AG04450 (cell line): ENCODE measurements at regions of chr2 and their contacts with region 1.

Region 1: GRCh38 chr2:219073413-219074129 is 12.8 kb upstream of the IHH start:
- DNase-seq: peak; percentile 27
- H3K4me3 ChIP-seq: no peak overlapping the region
- H3K27ac ChIP-seq: no peak overlapping the region
- H3K27me3 ChIP-seq: no peaks in the 10 kb centered on the region
- CTCF ChIP-seq: peak; percentile 63

Region 2: GRCh38 chr2:218523651-218524050 is 549.9 kb before region 1 on chr2:
- CTCF ChIA-PET with region 1: no interaction called
- POLR2A ChIA-PET with region 1: no interaction called
- DNase-seq: no peak
- H3K4me3 ChIP-seq: no peak overlapping the region
- H3K27ac ChIP-seq: no peak overlapping the region
- H3K27me3 ChIP-seq: no peaks in the 10 kb centered on the region
- CTCF ChIP-seq: no peak

Region 3: DNA sequence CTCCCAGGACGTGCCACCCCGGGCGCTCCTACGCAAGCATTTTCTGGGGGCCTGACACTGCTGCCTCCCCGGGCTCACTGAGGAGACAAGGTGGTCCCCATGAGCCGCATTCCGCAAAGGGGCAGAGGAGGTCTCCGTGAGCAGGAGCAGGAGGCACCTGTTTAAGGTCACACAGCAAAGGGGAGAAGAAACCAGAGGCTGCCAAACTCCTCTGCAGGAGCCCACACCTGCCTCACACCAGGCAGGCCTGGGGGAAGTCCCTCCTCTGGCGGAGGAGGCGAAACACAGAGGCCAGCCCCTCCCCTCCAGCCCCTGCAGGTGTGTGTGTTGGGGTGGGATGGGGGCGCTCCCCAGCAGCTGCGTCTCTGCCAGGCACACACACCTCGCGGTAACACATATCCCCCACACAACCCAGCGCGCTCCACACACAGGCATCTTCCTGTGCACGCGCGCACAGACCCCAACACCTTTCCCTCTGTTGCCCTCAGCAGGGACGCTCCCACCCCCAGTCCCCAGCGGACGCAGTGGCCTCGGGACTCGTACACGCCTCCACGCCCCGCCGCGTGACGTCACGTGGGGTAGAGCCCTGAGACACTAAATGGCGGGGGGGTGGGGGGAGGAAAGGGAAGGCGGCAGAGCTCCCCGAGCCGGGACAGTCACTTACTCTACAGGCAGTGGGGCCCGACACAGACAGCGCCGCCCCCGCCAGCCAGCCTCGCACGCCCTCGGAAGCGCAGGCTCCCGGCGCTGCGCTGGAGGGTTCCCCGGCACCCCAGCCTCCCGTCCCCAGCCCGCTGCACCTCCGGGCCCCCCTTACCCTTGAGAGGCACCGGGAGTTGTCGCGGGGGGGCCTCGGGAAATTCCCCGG is 193.5 kb before region 1 on chr2:
- CTCF ChIA-PET with region 1: no interaction called
- POLR2A ChIA-PET with region 1: no interaction called
- DNase-seq: no peak
- H3K4me3 ChIP-seq: no peak overlapping the region
- H3K27ac ChIP-seq: no peak overlapping the region
- H3K27me3 ChIP-seq: peaks cover 81% of the 10 kb centered on the region
- CTCF ChIP-seq: no peak

Region 4: DNA sequence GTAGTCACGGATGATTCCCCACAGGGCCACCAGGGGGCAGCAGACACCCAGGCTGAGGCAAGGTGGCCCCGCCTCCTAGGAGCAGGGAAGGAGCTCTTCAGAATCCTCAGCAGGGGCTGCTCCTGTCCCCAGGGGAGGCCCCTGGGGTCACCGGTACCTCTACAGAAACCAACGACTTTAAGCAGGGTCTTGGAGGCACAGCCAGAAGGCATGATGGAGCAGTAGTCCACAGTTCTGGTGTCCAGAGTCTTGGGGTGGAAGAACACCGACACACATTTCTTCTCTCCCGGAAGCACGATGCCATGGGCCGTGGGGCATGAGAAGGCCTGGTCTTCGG is 43.8 kb before region 1 on chr2:
- CTCF ChIA-PET with region 1: interaction called, 22 read pairs
- POLR2A ChIA-PET with region 1: no interaction called
- DNase-seq: peak; percentile 33
- H3K4me3 ChIP-seq: no peak overlapping the region
- H3K27ac ChIP-seq: no peak overlapping the region
- H3K27me3 ChIP-seq: peaks cover 41% of the 10 kb centered on the region
- CTCF ChIP-seq: peak; percentile 95

Region 5: GRCh38 chr2:219087361-219087760 is 13.8 kb after region 1 on chr2:
- CTCF ChIA-PET with region 1: interaction called, 16 read pairs
- POLR2A ChIA-PET with region 1: no interaction called
- DNase-seq: no peak
- H3K4me3 ChIP-seq: no peak overlapping the region
- H3K27ac ChIP-seq: no peak overlapping the region
- H3K27me3 ChIP-seq: no peaks in the 10 kb centered on the region
- CTCF ChIP-seq: no peak

Region 6: DNA sequence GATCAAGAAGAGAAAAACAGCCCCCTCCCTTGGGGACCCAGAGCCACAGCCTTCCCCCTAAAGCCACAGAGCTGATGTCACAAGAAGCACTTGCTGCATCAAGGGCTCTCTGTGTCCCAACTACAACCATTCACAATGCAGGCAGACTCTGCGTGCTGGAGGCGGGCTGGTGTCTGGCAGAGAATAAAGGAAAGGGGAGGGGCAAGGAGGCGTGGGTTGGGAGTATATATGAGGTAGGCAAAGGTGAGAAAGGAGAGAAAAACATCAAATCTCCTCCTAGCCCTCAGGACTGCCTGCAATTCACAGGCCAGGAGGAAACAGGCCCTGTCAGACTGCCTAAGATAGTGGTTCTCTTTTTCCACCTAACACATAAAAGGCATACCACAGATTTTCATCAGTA is 35.9 kb after region 1 on chr2:
- CTCF ChIA-PET with region 1: interaction called, 29 read pairs
- POLR2A ChIA-PET with region 1: no interaction called
- DNase-seq: no peak
- H3K4me3 ChIP-seq: no peak overlapping the region
- H3K27ac ChIP-seq: no peak overlapping the region
- H3K27me3 ChIP-seq: no peaks in the 10 kb centered on the region
- CTCF ChIP-seq: no peak

Region 7: GRCh38 chr2:219155054-219155644 is 81.6 kb after region 1 on chr2:
- CTCF ChIA-PET with region 1: interaction called, 81 read pairs
- POLR2A ChIA-PET with region 1: no interaction called
- DNase-seq: peak; percentile 34
- H3K4me3 ChIP-seq: no peak overlapping the region
- H3K27ac ChIP-seq: no peak overlapping the region
- H3K27me3 ChIP-seq: no peaks in the 10 kb centered on the region
- CTCF ChIP-seq: peak; percentile 58